CD8-positive, alpha-beta T cell (primary cell): ENCODE measurements at regions of chr14 and their contacts with region 1.

Region 1: GRCh38 chr14:23327947-23328744 is 6.9 kb downstream of the PABPN1 start:
- DNase-seq: peak in 8 of 9 experiments; percentile 43 to 82 (median 71)
- ATAC-seq: peak; percentile 82
- H3K4me3 ChIP-seq: no peak overlapping the region
- H3K4me3 Mint-ChIP-seq: no peak overlapping the region
- H3K27ac ChIP-seq: no peak overlapping the region
- H3K27ac Mint-ChIP-seq: no peak overlapping the region
- H3K4me1 ChIP-seq: peaks cover 2% of the 10 kb centered on the region
- H3K4me1 Mint-ChIP-seq: peaks cover 9% of the 10 kb centered on the region
- H3K27me3 ChIP-seq: no peaks in the 10 kb centered on the region
- H3K27me3 Mint-ChIP-seq: no peaks in the 10 kb centered on the region
- CTCF ChIP-seq: peak; percentile 87

Region 2: DNA sequence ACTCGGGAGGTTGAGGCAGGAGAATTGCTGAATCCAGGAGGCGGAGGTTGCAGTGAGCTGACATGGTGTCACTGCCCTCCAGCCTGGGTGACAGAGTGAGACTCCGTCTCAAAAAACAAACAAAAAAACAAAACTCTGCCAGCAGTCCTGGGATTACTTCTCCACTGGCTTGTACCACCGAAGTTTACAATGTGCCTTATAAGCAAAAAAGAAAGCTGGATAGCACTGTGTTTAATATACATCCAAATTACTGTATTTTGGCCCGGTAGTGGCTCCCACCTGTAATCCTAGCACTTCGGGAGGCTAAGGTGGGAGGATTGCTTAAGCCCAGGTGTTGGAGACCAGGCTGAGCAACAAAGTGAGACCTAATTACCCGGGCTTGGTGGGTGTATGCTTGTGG is 59.0 kb before region 1 on chr14:
- CTCF ChIA-PET with region 1: interaction called, 4 read pairs
- POLR2A ChIA-PET with region 1: no interaction called
- intact Hi-C with region 1: loop called (anchors 1 kb)
- DNase-seq: no peak
- ATAC-seq: no peak
- H3K4me3 ChIP-seq: no peak overlapping the region
- H3K4me3 Mint-ChIP-seq: no peak overlapping the region
- H3K27ac ChIP-seq: no peak overlapping the region
- H3K27ac Mint-ChIP-seq: no peak overlapping the region
- H3K4me1 ChIP-seq: no peaks in the 10 kb centered on the region
- H3K4me1 Mint-ChIP-seq: no peaks in the 10 kb centered on the region
- H3K27me3 ChIP-seq: peaks cover 0 to 2% of the 10 kb centered on the region in 2 experiments
- H3K27me3 Mint-ChIP-seq: peaks cover 2% of the 10 kb centered on the region
- CTCF ChIP-seq: no peak

Region 3: DNA sequence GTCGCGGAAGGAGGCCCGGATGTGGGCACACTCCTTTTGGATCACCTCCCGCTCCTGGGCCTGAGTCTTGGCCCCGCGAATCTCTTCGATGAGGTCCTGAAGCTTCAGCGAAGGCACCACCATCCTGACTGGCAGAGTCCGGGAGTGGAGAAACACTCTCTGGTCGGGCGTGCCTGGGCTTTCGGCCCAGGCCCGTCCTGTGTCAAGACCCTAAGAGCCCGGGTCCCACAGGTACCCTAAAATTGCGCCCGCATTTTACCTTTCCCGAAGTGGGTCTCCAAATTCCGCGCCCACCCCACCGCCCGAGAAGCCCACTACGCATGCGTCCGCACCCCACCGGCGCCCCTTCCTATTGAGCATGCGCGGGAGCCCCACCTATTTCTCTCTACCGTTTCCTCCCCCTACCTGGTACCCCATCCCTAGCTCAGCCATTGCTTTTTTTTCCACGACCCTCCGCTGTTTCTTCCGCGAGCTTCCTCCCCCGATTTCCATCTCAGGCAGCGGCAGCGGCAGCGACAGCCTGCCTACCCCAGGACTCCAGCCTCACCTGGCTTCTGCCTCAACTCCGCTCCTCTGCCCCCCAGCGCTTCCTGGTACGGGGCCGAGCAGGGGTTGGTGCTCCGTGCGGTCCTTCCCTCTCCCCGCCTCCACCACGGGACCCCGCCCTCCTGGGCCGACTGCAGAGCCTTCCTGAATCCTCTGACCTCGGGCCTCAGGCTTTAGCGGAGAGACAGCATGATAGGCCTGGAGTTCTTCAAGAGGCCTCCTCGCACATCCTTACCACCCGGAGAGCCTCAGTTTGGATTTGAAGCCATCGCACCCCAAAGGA is 239.3 kb after region 1 on chr14 and contains the start of gene AP1G2:
- CTCF ChIA-PET with region 1: no interaction called
- POLR2A ChIA-PET with region 1: no interaction called
- intact Hi-C with region 1: loop called in 1 of 2 experiments (anchors 2 kb)
- DNase-seq: peak; percentile 66 to 92 (median 84)
- ATAC-seq: peak; percentile 90
- H3K4me3 ChIP-seq: peak within 1 kb of the TSS; percentile 75 to 97
- H3K4me3 Mint-ChIP-seq: peak within 1 kb of the TSS; percentile 99
- H3K27ac ChIP-seq: peak within 1 kb of the TSS; percentile 86
- H3K27ac Mint-ChIP-seq: peak within 1 kb of the TSS; percentile 97
- H3K4me1 ChIP-seq: peaks cover 20% of the 10 kb centered on the region
- H3K4me1 Mint-ChIP-seq: peaks cover 44% of the 10 kb centered on the region
- H3K27me3 ChIP-seq: no peaks in the 10 kb centered on the region
- H3K27me3 Mint-ChIP-seq: peaks cover 1% of the 10 kb centered on the region
- CTCF ChIP-seq: no peak
- total RNA-seq, gene AP1G2: 153 to 160 TPM